MCF 10A (cell line): ENCODE measurements at regions of chr7 and their contacts with region 1.

Region 1: GRCh38 chr7:51141451-51142003 is 175.1 kb downstream of the COBL start:
- DNase-seq: peak; percentile 55
- H3K4me3 Mint-ChIP-seq: no peak overlapping the region
- H3K27ac Mint-ChIP-seq: no peak overlapping the region
- H3K4me1 Mint-ChIP-seq: peaks cover 27% of the 10 kb centered on the region
- H3K27me3 Mint-ChIP-seq: no peaks in the 10 kb centered on the region
- CTCF ChIP-seq: peak; percentile 71

Region 2: DNA sequence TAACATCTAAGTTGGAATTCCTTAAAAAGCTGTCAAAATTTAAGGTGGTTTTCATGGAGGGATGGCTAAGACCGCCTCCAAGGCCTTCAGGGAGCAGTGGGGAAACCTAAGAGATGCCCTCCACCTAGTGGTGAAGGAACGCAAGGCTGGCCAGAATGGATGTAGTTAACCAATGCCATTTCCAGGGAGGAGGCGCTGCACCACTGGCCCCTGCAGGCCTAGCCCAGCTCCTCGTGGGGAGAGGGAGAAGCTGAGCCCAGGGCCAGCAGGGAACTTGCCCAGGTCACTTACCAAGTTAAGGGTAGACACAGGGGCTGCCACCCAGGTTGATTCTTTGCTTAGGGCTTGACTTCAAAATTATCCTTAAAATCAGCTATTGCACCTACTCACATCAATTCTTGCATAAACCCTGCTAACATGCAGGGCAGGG is 723.4 kb before region 1 on chr7:
- CTCF ChIA-PET with region 1: interaction called, 5 read pairs
- POLR2A ChIA-PET with region 1: no interaction called
- intact Hi-C with region 1: loop called (anchors 5 kb)
- DNase-seq: peak; percentile 88
- H3K4me3 Mint-ChIP-seq: no peak overlapping the region
- H3K27ac Mint-ChIP-seq: no peak overlapping the region
- H3K4me1 Mint-ChIP-seq: no peaks in the 10 kb centered on the region
- H3K27me3 Mint-ChIP-seq: no peaks in the 10 kb centered on the region
- CTCF ChIP-seq: peak; percentile 75

Region 3: GRCh38 chr7:50696810-50697582 is 444.5 kb before region 1 on chr7:
- CTCF ChIA-PET with region 1: interaction called, 11 read pairs
- POLR2A ChIA-PET with region 1: no interaction called
- intact Hi-C with region 1: loop called (anchors 1 kb)
- DNase-seq: peak; percentile 23
- H3K4me3 Mint-ChIP-seq: no peak overlapping the region
- H3K27ac Mint-ChIP-seq: no peak overlapping the region
- H3K4me1 Mint-ChIP-seq: no peaks in the 10 kb centered on the region
- H3K27me3 Mint-ChIP-seq: no peaks in the 10 kb centered on the region
- CTCF ChIP-seq: peak; percentile 26

Region 4: DNA sequence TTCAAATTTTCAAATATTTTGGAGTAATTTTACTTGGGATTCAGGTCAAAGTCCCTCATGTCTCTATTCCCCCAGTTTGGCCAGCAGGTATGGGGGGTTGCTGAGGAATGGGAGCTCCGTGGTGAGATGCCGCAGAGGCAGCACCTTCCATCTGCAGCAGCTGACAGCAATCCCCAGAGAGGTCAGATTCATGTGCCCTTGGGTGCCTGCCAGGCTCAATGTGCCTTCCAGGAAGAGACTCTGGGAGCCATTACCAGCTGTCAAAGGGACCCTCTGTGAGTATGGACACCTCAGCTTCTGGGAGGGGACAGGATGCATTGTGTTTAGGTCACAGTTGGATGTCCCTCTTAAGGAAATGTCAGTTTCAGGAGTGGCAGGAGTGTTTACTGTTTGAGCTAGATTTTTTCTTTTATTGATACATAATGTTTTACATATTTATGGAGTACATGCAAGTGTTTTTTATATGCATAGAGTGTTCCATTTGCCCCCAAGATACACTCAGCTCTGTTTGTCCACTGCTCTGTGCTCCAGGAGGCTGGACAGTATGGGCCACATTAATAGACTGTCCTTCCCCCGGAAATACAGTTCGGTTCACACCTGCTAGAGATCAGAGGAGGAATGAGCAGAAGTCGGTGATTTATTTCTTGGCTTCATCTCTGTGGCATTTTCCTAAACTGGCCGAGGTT is 283.6 kb before region 1 on chr7:
- CTCF ChIA-PET with region 1: no interaction called
- POLR2A ChIA-PET with region 1: no interaction called
- intact Hi-C with region 1: no loop called
- DNase-seq: no peak
- H3K4me3 Mint-ChIP-seq: no peak overlapping the region
- H3K27ac Mint-ChIP-seq: no peak overlapping the region
- H3K4me1 Mint-ChIP-seq: no peaks in the 10 kb centered on the region
- H3K27me3 Mint-ChIP-seq: no peaks in the 10 kb centered on the region
- CTCF ChIP-seq: no peak

Region 5: DNA sequence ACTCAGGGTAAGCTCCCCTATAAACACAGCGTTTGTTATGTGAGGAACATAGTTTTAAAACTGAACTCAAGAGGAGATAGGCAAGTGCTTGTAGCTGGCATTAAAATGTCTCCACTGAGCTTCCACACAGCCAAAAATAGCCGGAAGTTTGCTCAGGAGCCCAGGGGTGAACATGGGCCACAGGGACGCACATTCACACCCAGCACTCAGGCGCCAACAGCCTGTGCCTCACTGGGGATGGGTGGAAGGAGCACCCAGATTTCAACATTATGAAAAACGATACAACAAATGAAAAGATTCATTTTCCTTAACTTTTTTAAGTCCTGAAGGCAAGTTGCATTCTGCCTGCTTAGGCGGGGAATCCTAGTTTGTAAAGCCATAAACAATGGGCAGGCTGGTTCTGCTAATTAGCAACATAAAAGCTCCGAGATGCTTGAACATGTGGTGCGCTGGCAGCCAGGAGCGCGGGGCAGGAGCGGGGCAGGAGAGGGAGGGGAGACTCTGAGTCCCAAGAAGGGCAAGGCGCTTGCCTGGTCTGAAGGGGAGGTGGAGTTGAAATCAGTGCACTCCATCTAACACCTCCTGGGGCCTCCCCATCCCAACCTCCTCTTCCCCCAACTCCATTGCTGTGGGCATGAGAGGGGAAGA is 60.8 kb before region 1 on chr7:
- CTCF ChIA-PET with region 1: interaction called, 13 read pairs
- POLR2A ChIA-PET with region 1: interaction called, 3 read pairs
- intact Hi-C with region 1: no loop called
- DNase-seq: no peak
- H3K4me3 Mint-ChIP-seq: no peak overlapping the region
- H3K27ac Mint-ChIP-seq: no peak overlapping the region
- H3K4me1 Mint-ChIP-seq: no peaks in the 10 kb centered on the region
- H3K27me3 Mint-ChIP-seq: no peaks in the 10 kb centered on the region
- CTCF ChIP-seq: no peak

Region 6: GRCh38 chr7:51154201-51154600 is 12.7 kb after region 1 on chr7:
- CTCF ChIA-PET with region 1: interaction called, 126 read pairs
- POLR2A ChIA-PET with region 1: no interaction called
- intact Hi-C with region 1: no loop called
- DNase-seq: no peak
- H3K4me3 Mint-ChIP-seq: no peak overlapping the region
- H3K27ac Mint-ChIP-seq: no peak overlapping the region
- H3K4me1 Mint-ChIP-seq: no peaks in the 10 kb centered on the region
- H3K27me3 Mint-ChIP-seq: no peaks in the 10 kb centered on the region
- CTCF ChIP-seq: no peak

Region 7: GRCh38 chr7:51198654-51199053 is 57.1 kb after region 1 on chr7:
- CTCF ChIA-PET with region 1: no interaction called
- POLR2A ChIA-PET with region 1: no interaction called
- intact Hi-C with region 1: no loop called
- DNase-seq: peak; percentile 37
- H3K4me3 Mint-ChIP-seq: no peak overlapping the region
- H3K27ac Mint-ChIP-seq: no peak overlapping the region
- H3K4me1 Mint-ChIP-seq: peaks cover 5% of the 10 kb centered on the region
- H3K27me3 Mint-ChIP-seq: no peaks in the 10 kb centered on the region
- CTCF ChIP-seq: no peak